Psoas muscle (tissue), 8 donors: ENCODE measurements at regions of chr6 and their contacts with region 1.

Region 1: DNA sequence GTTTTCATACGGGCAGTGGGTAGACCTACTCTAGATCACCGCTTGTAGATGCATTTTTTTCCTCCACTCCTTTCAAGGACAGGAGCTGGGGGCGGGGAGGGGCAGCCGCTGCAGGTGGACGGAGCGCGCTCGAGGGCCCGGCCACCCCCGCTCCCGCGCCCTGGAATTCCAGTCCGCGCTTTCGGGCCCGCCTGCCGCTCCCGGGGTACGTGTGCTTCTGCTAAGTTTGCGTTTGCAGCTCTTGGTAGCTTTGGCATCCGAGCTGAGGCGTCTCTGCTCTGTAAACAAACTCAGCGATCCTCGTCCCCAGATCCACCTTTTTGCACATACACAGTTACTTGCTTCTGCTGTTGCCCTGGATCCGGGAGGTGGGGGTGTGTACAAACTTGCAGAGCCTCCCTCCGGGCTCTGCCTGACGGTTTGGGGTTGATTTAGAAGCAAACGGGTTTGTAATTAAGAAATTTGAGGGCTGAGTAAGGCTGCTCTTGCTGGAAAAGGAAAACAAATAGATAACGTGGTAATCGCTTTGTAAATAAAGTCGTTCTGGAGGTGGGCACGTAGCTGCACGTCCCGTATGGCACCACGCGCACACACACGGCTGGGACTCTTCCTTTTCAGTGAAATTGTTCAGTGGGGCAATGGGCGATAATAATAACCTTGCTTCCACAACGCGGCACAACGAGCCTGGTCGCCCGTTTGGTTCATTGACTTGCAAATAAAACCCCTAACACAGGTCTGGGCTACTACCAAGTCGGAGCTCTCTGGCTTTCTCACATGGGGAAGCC is 976 bp upstream of the CITED2 start:
- DNase-seq: peak; percentile 91 to 93
- ATAC-seq: peak; percentile 76 to 81 (median 79)
- H3K4me3 ChIP-seq: peak overlapping the region; percentile 80
- H3K27ac ChIP-seq: peak overlapping the region; percentile 98
- H3K4me1 ChIP-seq: peaks cover 19% of the 10 kb centered on the region
- H3K27me3 ChIP-seq: no peaks in the 10 kb centered on the region
- CTCF ChIP-seq: no peak

Region 2: GRCh38 chr6:139047677-139048076 is 327.7 kb before region 1 on chr6:
- intact Hi-C with region 1: no loop called
- DNase-seq: no peak
- ATAC-seq: no peak
- H3K4me3 ChIP-seq: no peak overlapping the region
- H3K27ac ChIP-seq: no peak overlapping the region
- H3K4me1 ChIP-seq: no peaks in the 10 kb centered on the region
- H3K27me3 ChIP-seq: no peaks in the 10 kb centered on the region
- CTCF ChIP-seq: no peak

Region 3: DNA sequence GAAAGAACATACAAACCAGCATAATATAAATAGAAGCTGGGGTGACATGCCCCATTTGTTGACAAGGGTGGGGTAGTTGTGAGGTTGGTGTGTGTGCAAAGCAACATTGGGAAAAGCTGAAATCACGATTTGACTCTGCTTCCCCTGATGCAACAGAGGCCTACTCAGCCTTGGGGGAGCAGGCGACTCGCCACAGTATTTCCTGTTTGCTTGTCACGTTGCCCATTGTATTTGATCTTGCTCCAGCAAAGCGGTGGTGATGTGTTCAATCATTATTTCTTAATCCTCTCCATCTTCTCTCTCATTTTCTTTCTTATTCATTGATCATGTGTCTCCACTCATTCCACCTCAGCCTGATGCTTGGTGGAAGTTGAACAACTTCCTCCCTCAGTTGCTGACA is 164.9 kb after region 1 on chr6:
- intact Hi-C with region 1: loop called in 1 of 2 experiments (anchors 10 kb)
- DNase-seq: peak; percentile 29 to 67
- ATAC-seq: peak; percentile 33 to 55 (median 36)
- H3K4me3 ChIP-seq: peak overlapping the region; percentile 15
- H3K27ac ChIP-seq: peak overlapping the region; percentile 86
- H3K4me1 ChIP-seq: peaks cover 9% of the 10 kb centered on the region
- H3K27me3 ChIP-seq: no peaks in the 10 kb centered on the region
- CTCF ChIP-seq: no peak

Region 4: DNA sequence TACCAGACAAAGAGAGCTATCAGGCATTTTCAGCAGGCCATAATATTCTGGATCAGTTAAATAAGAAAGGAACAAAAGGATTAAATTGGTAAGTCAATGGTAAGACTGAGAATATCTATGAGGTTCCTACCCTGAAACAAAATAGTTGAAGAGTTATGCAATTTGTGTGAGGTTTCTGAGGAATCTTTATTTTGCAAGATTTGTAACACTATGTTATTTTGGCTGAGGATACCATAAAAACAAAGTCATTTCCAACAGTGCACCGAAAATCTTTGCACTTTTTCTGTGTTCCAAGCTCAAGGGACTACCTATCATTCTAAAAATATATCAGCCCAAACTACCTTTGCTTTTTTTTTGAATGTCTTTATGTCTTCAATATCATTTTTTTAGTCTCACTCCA is 382.4 kb after region 1 on chr6:
- intact Hi-C with region 1: loop called in 1 of 2 experiments (anchors 5 kb)
- DNase-seq: no peak
- ATAC-seq: peak in 2 of 4 donors; percentile 5 to 23
- H3K4me3 ChIP-seq: peak overlapping the region; percentile 20
- H3K27ac ChIP-seq: peak overlapping the region; percentile 77
- H3K4me1 ChIP-seq: peaks cover 67% of the 10 kb centered on the region
- H3K27me3 ChIP-seq: no peaks in the 10 kb centered on the region
- CTCF ChIP-seq: no peak

Region 5: GRCh38 chr6:139881728-139882211 is 506.3 kb after region 1 on chr6:
- intact Hi-C with region 1: loop called (anchors 2 to 10 kb)
- DNase-seq: no peak
- ATAC-seq: peak; percentile 55 to 72 (median 66)
- H3K4me3 ChIP-seq: peak overlapping the region; percentile 49
- H3K27ac ChIP-seq: peak overlapping the region; percentile 83
- H3K4me1 ChIP-seq: peaks cover 25% of the 10 kb centered on the region
- H3K27me3 ChIP-seq: no peaks in the 10 kb centered on the region
- CTCF ChIP-seq: peak; percentile 64

Region 6: DNA sequence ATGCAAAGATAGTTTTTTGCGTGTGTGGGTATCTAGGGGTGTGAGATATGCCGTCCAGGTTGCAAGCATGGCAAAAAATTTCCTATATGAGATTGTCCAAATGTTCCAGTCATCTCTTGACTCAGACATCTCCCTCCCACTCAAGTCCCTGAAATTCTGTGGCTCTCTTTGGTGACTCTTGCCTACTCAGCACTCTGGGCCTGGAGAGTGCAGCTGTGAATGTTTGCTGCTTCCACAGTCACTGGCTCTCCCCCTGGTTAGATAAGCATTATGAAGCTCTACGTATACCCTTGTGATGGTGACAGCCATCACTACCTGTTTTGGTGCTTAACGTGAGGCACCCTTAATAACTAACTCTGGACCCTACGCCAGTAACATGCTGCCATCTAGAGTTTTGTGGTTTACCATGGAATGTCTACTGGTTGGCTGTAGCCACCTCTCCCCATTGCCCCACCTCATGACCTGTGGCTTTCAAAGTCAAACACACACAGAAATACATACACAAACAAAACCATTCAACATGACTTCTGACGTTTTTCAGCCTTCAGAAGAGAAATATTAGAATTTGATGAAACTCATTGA is 620.9 kb after region 1 on chr6:
- intact Hi-C with region 1: loop called in 1 of 2 experiments (anchors 5 kb)
- DNase-seq: no peak
- ATAC-seq: peak; percentile 64 to 89 (median 81)
- H3K4me3 ChIP-seq: no peak overlapping the region
- H3K27ac ChIP-seq: no peak overlapping the region
- H3K4me1 ChIP-seq: peaks cover 4% of the 10 kb centered on the region
- H3K27me3 ChIP-seq: no peaks in the 10 kb centered on the region
- CTCF ChIP-seq: peak; percentile 21

Region 7: DNA sequence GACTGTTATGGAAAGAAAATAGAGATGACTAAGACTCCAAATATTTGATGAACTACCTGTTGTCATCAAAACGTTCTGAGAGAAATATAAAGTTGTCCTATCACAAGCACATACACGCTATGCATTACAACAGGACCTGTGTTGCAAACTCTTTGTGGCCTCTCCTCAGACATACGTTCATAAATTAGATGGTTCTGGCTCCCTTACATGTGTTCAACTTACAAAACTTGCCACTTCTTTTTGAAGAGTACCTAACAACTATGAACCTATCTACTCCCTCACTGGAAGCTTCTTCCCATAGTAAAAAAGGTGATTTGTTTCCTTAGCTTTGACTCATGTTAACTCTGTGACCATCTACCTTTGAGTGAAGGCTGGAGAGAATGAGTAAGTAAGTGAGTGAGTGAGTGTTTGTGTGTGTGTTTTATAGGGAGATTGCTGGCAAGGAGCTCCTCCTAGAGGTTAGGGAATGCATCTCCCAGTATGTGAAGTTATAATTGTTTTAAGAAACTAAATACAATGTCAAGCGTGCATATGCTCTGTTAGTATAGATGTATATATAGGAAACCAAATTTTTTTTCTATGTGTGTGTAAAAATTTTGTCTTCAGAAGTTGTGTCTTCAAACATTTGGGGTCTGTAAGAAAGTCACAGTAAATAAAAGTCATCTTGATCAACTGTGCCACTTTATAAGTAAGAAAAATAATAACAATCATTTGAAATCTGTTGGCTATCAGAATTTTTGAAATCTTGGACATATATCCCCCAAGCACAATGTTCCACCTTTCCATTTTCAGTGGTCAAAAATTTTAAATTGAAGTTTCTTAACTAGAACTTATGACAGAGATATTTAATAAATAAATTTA is 1546.2 kb after region 1 on chr6:
- intact Hi-C with region 1: loop called in 1 of 2 experiments (anchors 10 kb)
- DNase-seq: no peak
- ATAC-seq: peak in 2 of 4 donors; percentile 55 to 56
- H3K4me3 ChIP-seq: no peak overlapping the region
- H3K27ac ChIP-seq: no peak overlapping the region
- H3K4me1 ChIP-seq: no peaks in the 10 kb centered on the region
- H3K27me3 ChIP-seq: no peaks in the 10 kb centered on the region
- CTCF ChIP-seq: peak; percentile 50